Activated CD8-positive, alpha-beta T cell treated with anti-CD3 and anti-CD28 coated beads, Interleukin-2, amount 10 ng/mL, durations not matched to agents 7 days and 5 days (primary cell): ENCODE measurements at regions of chr4 and their contacts with region 1.

Region 1: DNA sequence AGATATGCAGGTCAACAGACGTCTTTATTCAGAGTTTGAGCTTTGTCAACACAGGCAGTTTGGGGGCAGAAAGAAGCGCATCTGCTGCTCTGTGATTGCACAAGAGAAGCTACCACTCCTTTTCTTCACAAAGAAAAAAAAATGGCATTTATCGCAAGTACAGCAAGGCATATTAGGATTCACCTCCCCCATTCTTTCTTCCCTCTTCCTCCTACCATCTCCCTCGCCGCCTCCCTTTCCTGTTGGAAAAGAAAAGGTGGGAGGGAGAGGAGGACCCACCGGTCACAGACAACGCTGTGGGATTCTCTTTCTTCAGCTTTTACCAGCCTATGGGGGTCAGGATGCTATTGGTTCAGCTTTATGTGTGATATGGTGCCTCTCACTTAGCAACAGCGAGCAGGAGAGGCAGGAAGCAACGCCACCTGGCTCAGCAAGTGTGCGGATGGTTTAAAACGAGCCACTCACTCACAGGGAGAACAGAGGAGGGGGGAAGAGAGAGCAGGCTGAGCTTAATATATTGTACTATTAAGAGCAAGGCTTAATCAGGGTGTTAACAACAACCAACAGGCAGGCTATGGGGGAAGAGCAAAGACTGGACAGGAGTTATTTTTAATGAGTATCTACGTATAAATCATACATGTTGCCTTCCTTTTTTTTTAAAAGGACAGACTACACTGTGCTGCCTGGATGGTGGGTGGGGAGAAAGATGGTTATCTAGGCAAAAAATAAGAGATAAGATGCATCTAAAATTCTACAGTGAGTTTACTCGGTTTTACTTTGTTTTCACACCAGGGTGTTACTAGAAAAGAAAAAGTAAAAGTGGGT is 104.7 kb downstream of the MAML3 start:
- DNase-seq: peak; percentile 73
- ATAC-seq: peak; percentile 95
- H3K4me3 Mint-ChIP-seq: peak overlapping the region; percentile 76
- H3K27ac Mint-ChIP-seq: peak overlapping the region; percentile 86
- H3K4me1 Mint-ChIP-seq: peaks cover 67% of the 10 kb centered on the region
- H3K27me3 Mint-ChIP-seq: peaks cover 5% of the 10 kb centered on the region

Region 2: GRCh38 chr4:139656614-139657486 is 392.4 kb before region 1 on chr4:
- CTCF ChIA-PET with region 1: interaction called, 10 read pairs
- POLR2A ChIA-PET with region 1: no interaction called
- DNase-seq: peak; percentile 64
- ATAC-seq: peak; percentile 81
- H3K4me3 Mint-ChIP-seq: peak overlapping the region; percentile 52
- H3K27ac Mint-ChIP-seq: peak overlapping the region; percentile 78
- H3K4me1 Mint-ChIP-seq: peaks cover 24% of the 10 kb centered on the region
- H3K27me3 Mint-ChIP-seq: peaks cover 2% of the 10 kb centered on the region

Region 3: DNA sequence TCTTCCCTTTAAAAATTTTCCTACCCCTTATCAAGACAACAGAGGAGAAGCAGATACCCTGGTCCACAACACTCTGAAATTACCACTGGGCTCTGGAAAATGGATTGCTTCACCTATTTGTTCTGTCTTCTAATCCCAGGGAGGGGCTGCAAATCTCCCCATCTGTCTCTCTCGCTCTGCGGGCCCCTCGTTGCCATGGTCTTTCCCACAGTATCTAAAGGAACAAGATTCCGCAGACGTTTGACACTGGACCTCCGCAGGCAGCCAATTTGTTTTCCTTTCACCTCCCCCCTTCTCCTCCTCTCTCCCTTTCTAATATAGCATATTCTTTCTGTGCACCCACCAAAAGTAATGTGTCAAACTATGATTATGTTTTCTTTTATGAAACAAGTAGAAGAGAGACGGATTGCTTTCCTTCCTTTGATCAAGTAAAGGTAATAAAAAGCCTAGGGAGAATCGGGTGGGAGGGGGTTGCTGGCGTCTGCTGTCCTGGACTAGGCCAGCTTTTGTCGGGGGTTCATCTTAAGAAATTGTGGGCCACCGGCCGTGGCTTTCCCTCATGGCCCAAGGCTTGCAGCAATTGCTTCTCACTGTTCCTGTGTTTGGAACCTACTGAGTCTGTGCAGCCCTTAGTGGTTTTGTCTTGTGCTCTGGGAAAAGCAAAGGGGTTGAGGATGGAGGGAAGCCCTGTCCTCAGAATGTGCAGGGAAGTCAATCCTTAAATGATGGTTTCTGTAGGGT is 302.6 kb before region 1 on chr4:
- CTCF ChIA-PET with region 1: no interaction called
- POLR2A ChIA-PET with region 1: no interaction called
- DNase-seq: no peak
- ATAC-seq: no peak
- H3K4me3 Mint-ChIP-seq: no peak overlapping the region
- H3K27ac Mint-ChIP-seq: no peak overlapping the region
- H3K4me1 Mint-ChIP-seq: peaks cover 16% of the 10 kb centered on the region
- H3K27me3 Mint-ChIP-seq: no peaks in the 10 kb centered on the region

Region 4: GRCh38 chr4:140000232-140000631 is 49.0 kb before region 1 on chr4:
- CTCF ChIA-PET with region 1: no interaction called
- POLR2A ChIA-PET with region 1: no interaction called
- DNase-seq: no peak
- ATAC-seq: no peak
- H3K4me3 Mint-ChIP-seq: no peak overlapping the region
- H3K27ac Mint-ChIP-seq: no peak overlapping the region
- H3K4me1 Mint-ChIP-seq: no peaks in the 10 kb centered on the region
- H3K27me3 Mint-ChIP-seq: peaks cover 5% of the 10 kb centered on the region

Region 5: DNA sequence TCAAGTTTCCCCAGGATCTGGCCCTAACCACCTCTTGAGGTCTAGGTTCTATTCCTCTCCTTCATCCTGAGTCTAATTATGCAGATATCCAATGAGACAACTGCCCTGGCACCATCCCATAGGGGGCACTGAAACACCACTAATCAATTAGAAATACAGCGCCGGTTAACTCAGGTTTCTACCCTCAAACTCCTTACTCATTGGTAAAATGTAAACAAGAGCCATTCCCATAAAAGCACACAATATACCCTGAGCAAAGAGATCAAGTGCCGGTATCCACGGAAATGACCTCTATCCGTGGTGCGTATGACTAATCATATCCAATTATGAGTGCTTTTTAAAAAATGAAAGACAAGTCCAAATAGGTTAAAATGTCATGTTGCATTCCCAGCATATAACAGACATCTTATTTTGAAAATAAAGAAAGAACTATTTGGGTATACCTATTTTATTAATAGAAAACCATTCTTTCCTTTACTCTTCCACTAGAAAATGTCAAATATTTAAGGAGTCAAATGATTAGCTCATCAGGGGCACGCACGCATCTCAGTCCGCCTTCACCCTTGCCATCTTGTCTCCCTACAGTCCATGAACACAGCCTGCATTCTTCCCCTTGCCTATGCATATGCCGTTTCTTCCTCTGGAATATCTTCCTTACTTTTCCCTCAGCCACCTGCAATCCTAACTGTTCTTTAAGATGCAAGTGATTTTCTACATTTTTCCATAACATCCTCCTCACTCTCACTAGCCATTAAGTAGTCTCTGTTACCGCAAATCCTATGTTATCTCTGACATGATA is 36.3 kb before region 1 on chr4:
- CTCF ChIA-PET with region 1: interaction called, 10 read pairs
- POLR2A ChIA-PET with region 1: interaction called, 3 read pairs
- DNase-seq: peak; percentile 71
- ATAC-seq: peak; percentile 97
- H3K4me3 Mint-ChIP-seq: no peak overlapping the region
- H3K27ac Mint-ChIP-seq: no peak overlapping the region
- H3K4me1 Mint-ChIP-seq: peaks cover 8% of the 10 kb centered on the region
- H3K27me3 Mint-ChIP-seq: peaks cover 7% of the 10 kb centered on the region

Region 6: DNA sequence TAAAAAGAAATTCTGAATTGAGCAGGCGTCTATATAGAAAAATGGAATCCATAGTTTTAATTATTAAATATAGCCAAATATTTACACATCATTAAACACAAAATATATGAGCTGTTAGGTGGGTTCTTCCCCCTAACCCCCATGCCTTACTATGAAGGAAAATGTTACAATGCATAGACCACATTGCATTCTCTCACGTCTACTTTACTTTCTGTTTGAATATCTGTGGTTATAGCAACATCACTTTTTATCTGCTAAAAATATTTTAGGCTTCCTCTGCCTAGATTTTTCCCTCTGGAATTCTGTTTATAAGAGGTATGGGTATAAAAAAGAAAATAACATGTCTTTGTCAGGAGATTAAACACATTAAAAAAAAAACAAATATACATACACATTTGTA is 31.6 kb after region 1 on chr4:
- CTCF ChIA-PET with region 1: interaction called, 12 read pairs
- POLR2A ChIA-PET with region 1: no interaction called
- DNase-seq: no peak
- ATAC-seq: peak; percentile 62
- H3K4me3 Mint-ChIP-seq: no peak overlapping the region
- H3K27ac Mint-ChIP-seq: no peak overlapping the region
- H3K4me1 Mint-ChIP-seq: peaks cover 46% of the 10 kb centered on the region
- H3K27me3 Mint-ChIP-seq: no peaks in the 10 kb centered on the region

Region 7: GRCh38 chr4:140095694-140096482 is 46.7 kb after region 1 on chr4:
- CTCF ChIA-PET with region 1: interaction called, 19 read pairs
- POLR2A ChIA-PET with region 1: interaction called, 3 read pairs
- DNase-seq: peak; percentile 84
- ATAC-seq: peak; percentile 75
- H3K4me3 Mint-ChIP-seq: peak overlapping the region; percentile 79
- H3K27ac Mint-ChIP-seq: peak overlapping the region; percentile 97
- H3K4me1 Mint-ChIP-seq: peaks cover 91% of the 10 kb centered on the region
- H3K27me3 Mint-ChIP-seq: no peaks in the 10 kb centered on the region

Region 8: DNA sequence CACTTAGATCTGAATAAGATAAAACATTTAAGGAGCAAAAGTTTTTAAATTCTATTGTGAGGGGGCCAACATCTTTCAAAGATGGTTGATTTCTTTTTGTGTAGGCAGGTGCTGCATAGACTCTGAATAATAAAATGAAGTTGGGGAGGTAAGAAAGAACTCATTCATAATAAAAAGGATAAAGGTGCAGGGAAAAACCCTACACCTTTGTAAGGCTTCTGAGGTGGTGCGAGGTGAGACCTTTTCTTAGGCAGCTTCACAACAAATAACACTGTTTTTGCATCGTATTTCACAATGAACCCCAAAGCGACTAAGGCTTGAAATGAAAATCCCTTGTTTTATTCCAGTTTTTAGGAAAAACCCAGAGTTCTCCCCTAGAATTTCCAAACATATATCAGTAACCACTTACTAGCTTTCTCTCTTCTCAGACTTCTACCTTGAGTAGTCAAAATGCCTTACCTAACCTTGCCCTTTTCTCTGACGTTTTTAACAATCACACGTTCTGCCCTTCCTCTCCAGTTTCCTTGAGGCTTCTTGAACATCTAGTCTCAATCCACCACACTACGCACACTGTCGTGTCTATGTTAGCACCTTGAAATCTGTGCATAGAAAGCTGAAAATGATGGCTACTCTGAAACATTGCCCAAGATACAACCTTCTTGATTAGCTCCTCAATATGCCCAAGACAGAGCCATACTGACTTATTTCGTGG is 74.6 kb after region 1 on chr4:
- CTCF ChIA-PET with region 1: interaction called, 10 read pairs
- POLR2A ChIA-PET with region 1: no interaction called
- DNase-seq: no peak
- ATAC-seq: no peak
- H3K4me3 Mint-ChIP-seq: no peak overlapping the region
- H3K27ac Mint-ChIP-seq: no peak overlapping the region
- H3K4me1 Mint-ChIP-seq: peaks cover 25% of the 10 kb centered on the region
- H3K27me3 Mint-ChIP-seq: no peaks in the 10 kb centered on the region

Region 9: GRCh38 chr4:140252742-140253555 is 203.7 kb after region 1 on chr4:
- CTCF ChIA-PET with region 1: interaction called, 58 read pairs
- POLR2A ChIA-PET with region 1: no interaction called
- DNase-seq: peak; percentile 62
- ATAC-seq: peak; percentile 86
- H3K4me3 Mint-ChIP-seq: peak overlapping the region; percentile 59
- H3K27ac Mint-ChIP-seq: peak overlapping the region; percentile 12
- H3K4me1 Mint-ChIP-seq: peaks cover 28% of the 10 kb centered on the region
- H3K27me3 Mint-ChIP-seq: peaks cover 13% of the 10 kb centered on the region

Region 10: DNA sequence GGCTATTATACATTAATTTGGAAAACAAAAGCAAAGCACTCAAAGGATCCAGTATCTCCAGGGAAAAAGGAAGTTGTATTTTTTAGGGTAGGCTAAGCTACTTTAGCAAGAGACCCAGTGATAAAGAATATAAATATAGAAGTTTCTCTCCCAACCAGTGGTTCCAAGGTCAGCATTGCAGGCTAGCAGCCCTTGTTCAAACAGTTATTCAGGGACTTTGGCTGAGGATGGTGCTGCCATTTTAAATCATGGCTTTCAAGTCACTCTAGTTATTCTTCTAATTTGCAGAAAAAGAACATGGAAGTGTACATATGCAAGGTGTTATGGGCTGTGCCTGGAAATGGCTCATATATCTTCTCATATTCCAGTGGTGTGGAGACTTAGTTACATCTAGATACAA is 333.5 kb after region 1 on chr4:
- CTCF ChIA-PET with region 1: no interaction called
- POLR2A ChIA-PET with region 1: no interaction called
- DNase-seq: no peak
- ATAC-seq: no peak
- H3K4me3 Mint-ChIP-seq: no peak overlapping the region
- H3K27ac Mint-ChIP-seq: no peak overlapping the region
- H3K4me1 Mint-ChIP-seq: no peaks in the 10 kb centered on the region
- H3K27me3 Mint-ChIP-seq: peaks cover 4% of the 10 kb centered on the region